CD4-positive, alpha-beta T cell (primary cell): ENCODE measurements at regions of chr6 and their contacts with region 1.

Region 1: DNA sequence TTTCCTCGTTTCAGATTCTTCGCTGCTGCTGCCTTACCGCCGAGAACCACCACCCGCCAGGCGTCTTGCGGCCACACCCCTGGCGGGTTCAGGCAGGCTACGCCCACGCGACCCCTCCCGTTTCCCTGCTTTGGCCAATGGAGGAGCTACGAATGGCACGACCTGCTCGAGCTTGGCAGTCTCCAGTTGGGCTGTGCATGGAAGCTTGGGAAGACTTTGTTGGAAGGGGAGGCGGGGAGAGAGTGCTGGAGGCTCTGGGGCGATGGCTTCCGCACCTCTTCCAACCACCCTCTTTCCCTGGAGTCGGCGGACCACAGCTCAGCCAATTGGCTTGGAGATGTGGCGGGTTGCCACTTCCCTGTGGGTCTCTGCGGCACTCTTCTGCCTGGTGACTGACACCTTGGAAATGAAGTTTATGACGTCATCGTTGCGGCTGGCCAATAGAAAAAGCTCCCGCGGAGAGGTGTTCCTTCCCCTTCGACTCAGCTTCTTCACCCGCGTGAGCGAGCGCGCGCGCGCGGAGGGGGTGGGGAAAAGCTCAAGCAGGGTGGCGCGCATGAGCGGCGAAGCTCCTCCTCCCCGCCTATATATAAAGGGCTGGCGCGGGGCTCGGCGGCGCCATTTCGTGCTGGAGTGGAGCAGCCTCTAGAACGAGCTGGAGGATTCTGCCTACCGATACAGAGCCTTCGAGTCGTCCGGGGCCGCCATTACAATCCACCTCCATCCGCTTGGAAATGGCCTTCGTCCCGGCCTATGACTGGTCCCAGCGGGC is 3.4 kb downstream of the BRD2 start:
- DNase-seq: peak; percentile 99 to 100 (median 100)
- ATAC-seq: peak; percentile 53
- H3K4me3 ChIP-seq: peak overlapping the region; percentile 97
- H3K4me3 Mint-ChIP-seq: peak overlapping the region; percentile 98
- H3K27ac ChIP-seq: peak overlapping the region; percentile 91 to 98
- H3K27ac Mint-ChIP-seq: peak overlapping the region; percentile 100
- H3K4me1 ChIP-seq: peaks cover 52% of the 10 kb centered on the region
- H3K4me1 Mint-ChIP-seq: peaks cover 48% of the 10 kb centered on the region
- H3K27me3 ChIP-seq: no peaks in the 10 kb centered on the region
- H3K27me3 Mint-ChIP-seq: no peaks in the 10 kb centered on the region
- CTCF ChIP-seq: no peak

Region 2: GRCh38 chr6:31163922-31164321 is 1807.8 kb before region 1 on chr6:
- CTCF ChIA-PET with region 1: no interaction called
- POLR2A ChIA-PET with region 1: no interaction called
- intact Hi-C with region 1: no loop called
- DNase-seq: no peak
- ATAC-seq: no peak
- H3K4me3 ChIP-seq: no peak overlapping the region
- H3K4me3 Mint-ChIP-seq: no peak overlapping the region
- H3K27ac ChIP-seq: no peak overlapping the region
- H3K27ac Mint-ChIP-seq: no peak overlapping the region
- H3K4me1 ChIP-seq: peaks cover 13% of the 10 kb centered on the region
- H3K4me1 Mint-ChIP-seq: peaks cover 12% of the 10 kb centered on the region
- H3K27me3 ChIP-seq: no peaks in the 10 kb centered on the region
- H3K27me3 Mint-ChIP-seq: no peaks in the 10 kb centered on the region
- CTCF ChIP-seq: no peak

Region 3: GRCh38 chr6:32127717-32128592 is 843.8 kb before region 1 on chr6 and contains the start of gene ATF6B:
- CTCF ChIA-PET with region 1: no interaction called
- POLR2A ChIA-PET with region 1: interaction called, 10 read pairs
- intact Hi-C with region 1: no loop called
- DNase-seq: peak; percentile 88 to 100 (median 96)
- ATAC-seq: peak; percentile 93
- H3K4me3 ChIP-seq: peak within 1 kb of the TSS; percentile 81
- H3K4me3 Mint-ChIP-seq: peak within 1 kb of the TSS; percentile 99
- H3K27ac ChIP-seq: peak within 1 kb of the TSS; percentile 63 to 77
- H3K27ac Mint-ChIP-seq: peak within 1 kb of the TSS; percentile 90
- H3K4me1 ChIP-seq: peaks cover 50% of the 10 kb centered on the region
- H3K4me1 Mint-ChIP-seq: peaks cover 52% of the 10 kb centered on the region
- H3K27me3 ChIP-seq: no peaks in the 10 kb centered on the region
- H3K27me3 Mint-ChIP-seq: no peaks in the 10 kb centered on the region
- CTCF ChIP-seq: no peak
- total RNA-seq, gene ATF6B: 72.2 to 75.6 TPM

Region 4: DNA sequence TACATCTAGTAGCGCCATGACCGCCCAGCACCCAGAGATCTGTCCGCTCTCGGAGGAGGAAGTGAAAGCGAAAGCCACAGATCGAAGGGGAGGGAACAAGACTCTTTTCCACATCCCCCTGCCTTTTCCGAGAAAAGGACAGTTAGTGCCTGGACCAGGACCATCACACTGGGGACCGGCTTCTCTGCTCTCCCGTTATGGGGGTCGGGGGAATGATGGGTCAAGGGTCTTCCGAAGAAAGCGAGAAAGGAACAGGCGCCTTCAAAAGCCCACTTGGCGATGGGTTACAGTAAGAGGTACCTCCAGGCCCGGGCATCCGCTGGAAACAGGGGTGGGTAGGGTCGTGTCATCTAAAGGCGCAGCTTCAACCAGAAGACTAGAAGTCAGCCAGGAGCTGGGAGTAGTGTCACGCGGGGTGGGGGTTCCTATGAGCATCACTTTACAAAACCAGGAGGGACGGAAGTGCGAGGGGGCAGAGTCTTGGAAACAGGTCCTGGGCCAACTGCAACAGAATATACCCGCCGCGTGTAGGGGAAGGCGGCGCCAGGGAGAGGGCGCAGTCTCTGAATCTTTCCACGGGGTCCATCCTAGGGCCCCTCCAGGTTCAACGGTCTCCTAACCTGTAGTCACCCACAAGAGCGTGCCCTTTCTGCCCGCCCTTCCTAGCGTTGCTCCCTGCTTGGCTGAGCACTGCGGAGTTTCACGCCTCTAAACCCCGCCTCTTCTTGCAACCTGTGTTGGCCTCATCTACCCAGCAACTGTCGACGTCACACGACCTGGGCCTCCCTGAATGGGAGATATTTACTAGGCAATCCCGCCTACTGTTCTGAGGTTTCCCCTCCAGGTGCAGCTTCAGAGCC is 127.6 kb before region 1 on chr6 and contains the start of gene PSMB8:
- CTCF ChIA-PET with region 1: interaction called, 19 read pairs
- POLR2A ChIA-PET with region 1: interaction called, 444 read pairs
- intact Hi-C with region 1: loop called (anchors 1 to 2 kb)
- DNase-seq: peak; percentile 94 to 99 (median 98)
- ATAC-seq: peak; percentile 79
- H3K4me3 ChIP-seq: peak within 1 kb of the TSS; percentile 94
- H3K4me3 Mint-ChIP-seq: peak within 1 kb of the TSS; percentile 97
- H3K27ac ChIP-seq: peak within 1 kb of the TSS; percentile 99 to 100
- H3K27ac Mint-ChIP-seq: peak within 1 kb of the TSS; percentile 99
- H3K4me1 ChIP-seq: peaks cover 73% of the 10 kb centered on the region
- H3K4me1 Mint-ChIP-seq: peaks cover 96% of the 10 kb centered on the region
- H3K27me3 ChIP-seq: no peaks in the 10 kb centered on the region
- H3K27me3 Mint-ChIP-seq: no peaks in the 10 kb centered on the region
- CTCF ChIP-seq: no peak
- total RNA-seq, gene PSMB8: 120 to 121 TPM

Region 5: GRCh38 chr6:32933636-32934085 is 38.1 kb before region 1 on chr6:
- CTCF ChIA-PET with region 1: interaction called, 32 read pairs
- POLR2A ChIA-PET with region 1: interaction called, 325 read pairs
- intact Hi-C with region 1: loop called in 1 of 2 experiments (anchors 1 kb)
- DNase-seq: peak; percentile 61 to 88 (median 74)
- ATAC-seq: peak; percentile 68
- H3K4me3 ChIP-seq: no peak overlapping the region
- H3K4me3 Mint-ChIP-seq: no peak overlapping the region
- H3K27ac ChIP-seq: no peak overlapping the region
- H3K27ac Mint-ChIP-seq: no peak overlapping the region
- H3K4me1 ChIP-seq: no peaks in the 10 kb centered on the region
- H3K4me1 Mint-ChIP-seq: peaks cover 6% of the 10 kb centered on the region
- H3K27me3 ChIP-seq: no peaks in the 10 kb centered on the region
- H3K27me3 Mint-ChIP-seq: no peaks in the 10 kb centered on the region
- CTCF ChIP-seq: peak; percentile 84

Region 6: DNA sequence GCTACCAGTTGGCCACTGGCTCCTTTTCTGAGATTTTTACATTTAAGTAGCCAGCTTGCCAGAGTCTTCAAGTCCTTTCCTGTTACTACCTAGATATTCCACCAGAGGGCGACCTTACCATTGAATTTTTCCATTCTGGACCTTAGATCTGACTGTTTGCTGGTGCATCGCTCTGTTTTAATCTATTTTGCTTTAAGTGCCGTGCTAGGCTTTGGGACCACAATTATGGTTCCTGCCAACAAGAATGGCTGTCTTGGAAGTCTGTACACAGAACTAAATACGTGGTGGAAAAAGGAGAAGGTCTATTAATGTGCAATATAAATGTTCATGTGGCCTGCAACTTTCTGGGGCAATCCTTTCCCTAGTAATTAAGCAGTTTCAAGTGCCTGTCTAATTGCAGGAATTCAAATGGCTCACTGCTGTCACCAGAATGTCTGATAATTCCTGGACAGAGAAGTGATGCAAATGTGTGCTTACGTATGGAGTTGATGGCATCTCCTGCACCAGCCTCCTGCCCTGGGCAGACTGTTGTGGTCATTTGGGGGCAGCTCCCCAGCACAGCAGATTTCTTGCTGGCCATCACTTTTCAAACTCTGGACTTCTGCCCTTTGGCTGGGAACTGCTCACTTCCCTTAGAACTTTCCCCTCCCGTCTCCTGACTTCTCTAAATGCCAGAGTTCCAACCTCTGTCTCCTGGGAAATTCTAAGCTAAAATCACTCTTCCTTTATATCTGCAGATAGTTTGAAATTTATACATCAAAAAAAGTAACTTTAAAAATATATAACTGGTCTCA is 43.3 kb after region 1 on chr6:
- CTCF ChIA-PET with region 1: no interaction called
- POLR2A ChIA-PET with region 1: interaction called, 14 read pairs
- intact Hi-C with region 1: no loop called
- DNase-seq: peak in 9 of 14 experiments; percentile 8 to 88 (median 48)
- ATAC-seq: peak; percentile 78
- H3K4me3 ChIP-seq: no peak overlapping the region
- H3K4me3 Mint-ChIP-seq: no peak overlapping the region
- H3K27ac ChIP-seq: no peak overlapping the region
- H3K27ac Mint-ChIP-seq: no peak overlapping the region
- H3K4me1 ChIP-seq: peaks cover 22% of the 10 kb centered on the region
- H3K4me1 Mint-ChIP-seq: peaks cover 36% of the 10 kb centered on the region
- H3K27me3 ChIP-seq: peaks cover 8 to 10% of the 10 kb centered on the region in 2 experiments
- H3K27me3 Mint-ChIP-seq: peaks cover 5% of the 10 kb centered on the region
- CTCF ChIP-seq: peak; percentile 89

Region 7: DNA sequence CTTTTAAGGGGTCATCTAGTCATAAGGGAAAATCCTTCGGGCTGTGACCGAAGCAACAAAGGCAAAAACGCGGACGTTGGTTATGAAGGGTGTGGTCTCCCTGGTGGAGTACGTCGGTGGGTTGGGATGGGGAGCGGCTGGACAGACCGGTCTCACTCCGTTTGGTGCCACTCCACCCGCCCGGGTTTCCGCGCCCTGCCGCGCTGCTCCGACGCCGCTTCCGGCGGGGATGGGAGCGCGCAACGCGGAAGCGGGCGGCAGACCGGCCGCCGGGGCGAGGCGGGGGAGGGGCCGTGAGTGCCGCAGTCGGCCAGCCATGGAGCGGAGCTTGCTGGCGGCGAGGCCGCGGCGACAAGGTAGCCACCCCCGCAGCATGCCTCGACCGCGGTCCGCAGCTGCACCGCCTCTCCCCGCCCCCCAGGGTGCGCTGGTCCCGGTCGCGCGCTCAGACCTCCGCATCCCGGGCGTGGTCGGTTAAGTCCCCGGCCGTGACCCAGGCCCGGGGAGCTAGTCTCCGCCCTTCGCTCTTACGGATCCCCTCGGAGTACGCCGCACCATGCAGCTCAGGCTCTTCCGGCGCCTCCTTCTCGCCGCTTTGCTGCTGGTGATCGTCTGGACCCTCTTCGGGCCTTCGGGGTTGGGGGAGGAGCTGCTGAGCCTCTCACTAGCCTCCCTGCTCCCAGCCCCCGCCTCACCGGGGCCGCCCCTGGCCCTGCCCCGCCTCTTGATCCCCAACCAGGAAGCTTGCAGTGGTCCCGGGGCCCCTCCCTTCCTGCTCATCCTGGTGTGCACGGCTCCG is 305.3 kb after region 1 on chr6 and contains the start of gene B3GALT4:
- CTCF ChIA-PET with region 1: no interaction called
- POLR2A ChIA-PET with region 1: interaction called, 27 read pairs
- intact Hi-C with region 1: no loop called
- DNase-seq: peak in 13 of 14 experiments; percentile 45 to 89 (median 64)
- ATAC-seq: peak; percentile 68
- H3K4me3 ChIP-seq: peak within 1 kb of the TSS; percentile 96
- H3K4me3 Mint-ChIP-seq: peak within 1 kb of the TSS; percentile 93
- H3K27ac ChIP-seq: peak within 1 kb of the TSS; percentile 82 to 90
- H3K27ac Mint-ChIP-seq: peak within 1 kb of the TSS; percentile 97
- H3K4me1 ChIP-seq: peaks cover 83% of the 10 kb centered on the region
- H3K4me1 Mint-ChIP-seq: peaks cover 67% of the 10 kb centered on the region
- H3K27me3 ChIP-seq: no peaks in the 10 kb centered on the region
- H3K27me3 Mint-ChIP-seq: no peaks in the 10 kb centered on the region
- CTCF ChIP-seq: peak; percentile 36
- total RNA-seq, gene B3GALT4: 11.1 to 12.7 TPM

Region 8: DNA sequence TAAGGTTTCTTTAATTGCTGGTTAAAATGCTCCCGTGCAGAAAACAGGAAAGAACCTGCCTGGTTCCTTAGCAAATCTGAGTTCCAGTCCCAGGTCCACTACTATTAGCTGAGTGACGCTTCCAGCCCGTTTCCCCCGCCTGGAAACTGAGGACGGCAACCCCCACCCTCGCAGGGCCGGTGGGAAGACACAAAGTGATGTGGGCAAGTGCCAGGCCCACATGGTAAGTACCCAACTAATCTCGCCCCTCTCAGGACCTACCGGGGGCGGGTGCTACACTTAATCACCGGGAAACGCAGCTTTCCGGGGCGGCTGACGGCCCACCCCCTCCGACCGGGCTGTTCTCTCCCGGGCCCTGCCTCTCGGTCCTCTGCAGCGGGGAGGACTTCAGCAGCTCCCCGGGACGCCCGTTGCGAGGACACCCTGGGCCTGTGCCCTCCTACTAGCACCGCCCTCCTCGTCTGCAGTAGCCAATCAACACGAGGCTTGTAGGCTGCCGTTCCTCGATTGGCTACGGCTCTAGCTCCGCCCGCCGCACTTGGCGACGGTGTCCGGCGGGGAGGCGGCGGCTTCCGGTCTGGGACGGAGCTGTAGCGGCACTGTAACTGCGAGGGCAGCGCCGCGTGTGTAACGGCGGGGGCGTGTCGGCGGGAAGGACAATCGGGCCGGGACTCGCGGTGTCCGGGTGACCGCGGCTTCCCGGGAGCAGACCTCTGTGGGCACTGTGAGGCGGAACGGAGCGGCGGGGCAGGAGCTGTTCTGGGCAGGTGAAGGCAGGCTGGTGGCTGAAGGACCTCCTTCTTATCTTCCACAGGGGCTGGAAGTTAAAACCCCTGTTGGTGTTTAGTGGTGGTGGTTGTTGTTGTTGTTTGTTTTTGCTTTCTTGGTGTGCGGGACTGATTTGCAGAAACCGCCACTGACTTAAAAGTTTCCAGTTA is 482.5 kb after region 1 on chr6 and contains the start of gene ZBTB9:
- CTCF ChIA-PET with region 1: no interaction called
- POLR2A ChIA-PET with region 1: interaction called, 10 read pairs
- intact Hi-C with region 1: no loop called
- DNase-seq: peak; percentile 82 to 97 (median 92)
- ATAC-seq: peak; percentile 98
- H3K4me3 ChIP-seq: peak within 1 kb of the TSS; percentile 89
- H3K4me3 Mint-ChIP-seq: peak within 1 kb of the TSS; percentile 92
- H3K27ac ChIP-seq: peak within 1 kb of the TSS; percentile 55 to 60
- H3K27ac Mint-ChIP-seq: peak within 1 kb of the TSS; percentile 87
- H3K4me1 ChIP-seq: peaks cover 33% of the 10 kb centered on the region
- H3K4me1 Mint-ChIP-seq: peaks cover 41% of the 10 kb centered on the region
- H3K27me3 ChIP-seq: no peaks in the 10 kb centered on the region
- H3K27me3 Mint-ChIP-seq: no peaks in the 10 kb centered on the region
- CTCF ChIP-seq: no peak
- total RNA-seq, gene ZBTB9: 5.5 to 5.7 TPM